ENCODE measurements at regions of chr3 and their contacts with region 1.

Region 1: GRCh38 chr3:167882067-167882667 is 146.6 kb downstream of the SERPINI1 start:
- DNase-seq: no peak
- H3K4me3 Mint-ChIP-seq: no peak overlapping the region
- H3K27ac Mint-ChIP-seq: no peak overlapping the region
- H3K4me1 Mint-ChIP-seq: no peaks in the 10 kb centered on the region
- H3K27me3 Mint-ChIP-seq: peaks cover 9% of the 10 kb centered on the region

Region 2: DNA sequence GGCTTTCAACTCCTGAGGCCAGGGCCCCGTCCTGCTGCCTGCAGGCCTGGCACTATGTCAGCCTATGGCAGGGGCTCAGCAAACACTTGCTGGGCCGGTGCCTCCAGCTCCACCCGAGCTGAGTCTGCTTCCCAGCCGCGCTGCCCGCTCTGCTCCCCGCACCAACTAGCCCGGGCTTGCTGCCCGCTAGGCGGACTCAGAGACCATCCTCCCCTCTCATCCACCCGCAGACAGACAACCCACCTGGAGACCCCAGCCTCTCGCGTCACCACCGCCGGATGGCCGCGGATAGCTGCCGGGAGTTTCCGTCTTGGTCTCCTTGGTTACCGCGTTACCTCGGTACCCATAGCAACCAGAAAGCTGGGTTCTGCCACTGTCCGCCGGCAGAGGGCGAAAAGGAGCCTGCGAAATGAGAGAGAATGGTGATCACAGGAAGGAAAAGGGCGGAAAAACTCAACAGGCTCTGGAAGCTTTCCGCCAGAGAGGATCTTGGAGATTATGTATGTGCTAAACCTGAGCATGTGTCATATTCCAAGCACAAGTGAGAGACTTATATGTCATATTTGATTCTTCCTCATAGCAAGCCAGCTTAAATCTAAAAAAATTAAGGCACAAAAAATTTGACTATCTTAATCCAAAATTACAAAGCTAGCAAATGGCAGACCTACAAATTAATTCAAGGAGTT is 502.0 kb before region 1 on chr3 and contains the start of gene ZBBX:
- intact Hi-C with region 1: loop called (anchors 1 kb)
- DNase-seq: peak; percentile 96
- H3K4me3 Mint-ChIP-seq: peak within 1 kb of the TSS; percentile 85
- H3K27ac Mint-ChIP-seq: peak within 1 kb of the TSS; percentile 49
- H3K4me1 Mint-ChIP-seq: peaks cover 4% of the 10 kb centered on the region
- H3K27me3 Mint-ChIP-seq: peaks cover 14% of the 10 kb centered on the region
- total RNA-seq, gene ZBBX: not detected in 2 replicates

Region 3: GRCh38 chr3:167837466-167837865 is 44.7 kb before region 1 on chr3:
- intact Hi-C with region 1: loop called (anchors 5 kb)
- DNase-seq: no peak
- H3K4me3 Mint-ChIP-seq: no peak overlapping the region
- H3K27ac Mint-ChIP-seq: no peak overlapping the region
- H3K4me1 Mint-ChIP-seq: no peaks in the 10 kb centered on the region
- H3K27me3 Mint-ChIP-seq: no peaks in the 10 kb centered on the region